GM23248 (cell line): ENCODE measurements at regions of chr17 and their contacts with region 1.

Region 1: GRCh38 chr17:2064980-2065785 is 10.3 kb downstream of the HIC1 start:
- DNase-seq: peak; percentile 85
- H3K4me3 ChIP-seq: no peak overlapping the region
- H3K27ac ChIP-seq: peak overlapping the region; percentile 96
- H3K4me1 ChIP-seq: peaks cover 76% of the 10 kb centered on the region
- H3K27me3 ChIP-seq: no peaks in the 10 kb centered on the region

Region 2: DNA sequence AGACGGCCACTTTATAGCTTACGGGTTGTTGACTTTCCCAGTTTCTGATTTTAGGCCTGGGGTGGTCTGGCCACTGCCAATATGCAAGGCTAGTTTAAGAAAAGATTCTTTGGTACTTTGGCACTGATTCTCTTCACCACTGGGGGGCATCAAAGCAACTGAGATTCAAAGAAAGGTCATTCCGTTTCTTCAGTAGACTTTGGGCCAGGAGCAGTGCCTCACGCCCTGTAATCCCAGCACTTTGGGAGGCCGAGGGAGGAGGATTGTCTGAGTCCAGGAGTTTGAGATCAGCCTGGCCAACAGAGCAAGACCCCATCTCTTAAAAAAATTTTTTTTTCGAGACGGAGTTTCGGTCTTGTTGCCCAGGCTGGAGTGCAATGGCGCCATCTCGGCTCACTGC is 182.3 kb before region 1 on chr17:
- in situ Hi-C with region 1: no loop called
- DNase-seq: peak; percentile 69
- H3K4me3 ChIP-seq: no peak overlapping the region
- H3K27ac ChIP-seq: no peak overlapping the region
- H3K4me1 ChIP-seq: no peaks in the 10 kb centered on the region
- H3K27me3 ChIP-seq: no peaks in the 10 kb centered on the region

Region 3: GRCh38 chr17:2244545-2245525 is 179.7 kb after region 1 on chr17:
- in situ Hi-C with region 1: loop called (anchors 10 kb)
- DNase-seq: peak; percentile 94
- H3K4me3 ChIP-seq: peak overlapping the region; percentile 33
- H3K27ac ChIP-seq: peak overlapping the region; percentile 99
- H3K4me1 ChIP-seq: peaks cover 40% of the 10 kb centered on the region
- H3K27me3 ChIP-seq: no peaks in the 10 kb centered on the region